ENCODE measurements at regions of chr18 and their contacts with region 1.

Region 1: DNA sequence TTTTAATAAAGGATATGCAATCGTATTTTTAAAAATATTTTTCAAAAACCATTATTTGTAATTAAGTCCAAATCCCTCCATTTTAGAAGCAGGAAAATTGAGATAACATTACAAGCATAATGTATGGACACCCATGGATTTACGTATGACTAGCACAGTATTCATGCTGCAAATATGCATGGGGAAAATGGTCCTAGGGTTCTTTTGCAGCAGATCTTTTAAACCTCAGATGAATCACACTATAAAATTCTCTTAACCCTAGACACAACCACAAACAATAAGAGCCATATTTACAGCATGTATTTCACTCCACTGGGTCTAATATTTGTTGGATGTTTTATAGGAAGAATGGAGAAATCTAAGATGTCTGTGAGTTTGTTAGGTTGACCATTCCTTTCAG is 453.4 kb downstream of the TGIF1 start:
- DNase-seq: no peak
- H3K4me3 ChIP-seq: no peak overlapping the region
- H3K27ac ChIP-seq: no peak overlapping the region
- H3K4me1 ChIP-seq: no peaks in the 10 kb centered on the region
- H3K27me3 ChIP-seq: no peaks in the 10 kb centered on the region
- CTCF ChIP-seq: no peak
- EP300 ChIP-seq: no peak
- POLR2A ChIP-seq: no peak

Region 2: GRCh38 chr18:3634250-3634939 is 268.9 kb before region 1 on chr18:
- intact Hi-C with region 1: no loop called
- DNase-seq: no peak
- H3K4me3 ChIP-seq: no peak overlapping the region
- H3K27ac ChIP-seq: no peak overlapping the region
- H3K4me1 ChIP-seq: no peaks in the 10 kb centered on the region
- H3K27me3 ChIP-seq: no peaks in the 10 kb centered on the region
- CTCF ChIP-seq: no peak
- EP300 ChIP-seq: no peak
- POLR2A ChIP-seq: no peak

Region 3: DNA sequence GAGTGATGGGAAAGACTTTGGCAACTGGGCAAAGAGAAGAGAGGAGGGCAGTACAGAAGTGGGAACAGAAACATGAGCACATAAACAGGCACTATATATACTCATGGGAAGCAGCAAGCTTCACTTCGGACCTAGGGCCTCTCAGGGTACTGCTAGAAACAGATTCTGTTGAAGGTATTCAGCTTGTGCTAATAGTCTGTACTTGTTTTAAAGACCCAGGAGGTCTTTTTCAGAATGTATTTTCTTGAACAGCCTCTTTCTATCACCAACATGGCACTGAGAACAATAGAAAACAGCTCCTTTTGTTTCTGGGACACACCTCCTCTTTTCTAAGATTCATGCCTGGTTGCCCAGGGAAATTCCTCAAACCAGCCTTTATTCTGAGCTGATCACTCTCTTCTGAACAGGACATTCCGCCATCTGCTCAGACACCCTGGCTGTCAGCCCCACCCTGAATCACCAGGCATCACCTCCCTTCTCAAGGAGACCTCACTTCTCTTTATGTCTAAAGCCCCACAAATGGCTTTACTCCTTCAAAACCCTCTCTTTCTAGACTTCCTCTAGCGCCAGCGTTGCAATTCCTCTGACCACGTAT is 63.8 kb before region 1 on chr18:
- intact Hi-C with region 1: loop called (anchors 10 kb)
- DNase-seq: no peak
- H3K4me3 ChIP-seq: no peak overlapping the region
- H3K27ac ChIP-seq: no peak overlapping the region
- H3K4me1 ChIP-seq: no peaks in the 10 kb centered on the region
- H3K27me3 ChIP-seq: no peaks in the 10 kb centered on the region
- CTCF ChIP-seq: no peak
- EP300 ChIP-seq: no peak
- POLR2A ChIP-seq: no peak

Region 4: DNA sequence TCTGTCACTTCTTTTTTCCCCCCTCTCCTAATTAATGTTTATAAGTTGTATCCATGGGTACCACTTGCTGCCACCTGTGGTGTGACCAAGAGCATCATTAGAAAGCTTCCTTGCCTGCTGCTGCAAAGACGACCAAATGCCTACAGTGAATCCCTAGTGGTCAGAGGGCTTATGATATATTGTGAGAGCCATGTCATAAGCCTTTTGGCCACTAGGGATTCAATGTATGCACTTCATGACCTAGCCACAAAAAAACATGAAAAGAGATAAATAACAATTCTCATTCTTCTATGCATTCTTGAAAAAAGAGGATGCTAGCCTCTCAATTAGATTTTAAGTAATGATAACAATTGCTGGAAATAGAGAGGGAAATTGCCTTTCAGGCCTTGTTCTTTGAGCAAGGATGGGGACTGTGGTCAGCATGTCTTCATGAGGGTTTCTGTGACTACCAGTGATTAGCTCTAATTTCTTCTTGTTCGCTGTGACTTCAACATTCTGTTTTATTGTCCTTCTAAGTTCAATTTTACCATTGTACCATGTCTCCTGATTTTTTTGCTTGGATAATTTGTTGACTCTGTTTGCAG is 18.0 kb before region 1 on chr18:
- intact Hi-C with region 1: no loop called
- DNase-seq: no peak
- H3K4me3 ChIP-seq: no peak overlapping the region
- H3K27ac ChIP-seq: no peak overlapping the region
- H3K4me1 ChIP-seq: no peaks in the 10 kb centered on the region
- H3K27me3 ChIP-seq: no peaks in the 10 kb centered on the region
- CTCF ChIP-seq: no peak
- EP300 ChIP-seq: no peak
- POLR2A ChIP-seq: no peak